AG04449 (cell line): ENCODE measurements at regions of chr14 and their contacts with region 1.

Region 1: DNA sequence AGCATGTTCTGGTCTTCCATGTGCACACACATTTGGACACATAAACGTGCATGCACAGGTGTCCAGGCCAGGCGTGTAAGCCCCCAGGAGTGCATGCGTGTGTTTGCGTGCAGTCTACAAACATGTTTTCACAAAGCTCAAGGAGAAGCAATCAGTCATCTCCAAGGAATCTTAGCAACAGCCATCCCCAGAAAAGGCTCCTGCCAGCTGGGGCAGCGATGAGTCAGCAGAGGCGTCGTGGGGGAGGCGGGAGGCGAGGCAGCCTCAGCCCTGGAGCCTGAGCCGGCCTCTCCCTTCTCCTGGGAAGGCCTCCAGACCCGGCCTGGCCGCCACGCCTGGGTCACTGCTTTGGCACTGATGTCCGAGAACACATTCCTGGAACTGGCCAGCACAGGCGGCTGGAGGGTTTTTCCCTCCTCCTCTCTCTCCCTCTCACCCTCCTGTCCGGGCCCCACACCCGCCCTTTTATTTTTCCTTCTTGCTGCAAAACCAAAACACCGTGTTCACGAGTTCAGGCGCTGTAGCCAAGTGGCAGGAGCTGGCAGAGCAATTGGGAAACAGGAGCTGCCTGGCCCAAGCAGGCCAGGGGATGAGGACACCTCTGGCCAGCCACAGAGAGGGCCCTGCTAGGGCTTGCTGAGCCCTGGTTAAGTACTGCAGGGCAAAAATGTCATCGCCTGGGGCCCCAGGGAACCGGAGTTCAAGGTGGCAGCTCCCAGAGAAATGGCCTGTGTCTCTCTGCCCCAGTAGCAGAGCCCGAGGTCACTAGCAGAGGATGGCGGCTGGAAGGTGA is 92.7 kb downstream of the LRRC74A start:
- DNase-seq: peak; percentile 92
- H3K4me3 ChIP-seq: peak overlapping the region; percentile 39
- CTCF ChIP-seq: peak; percentile 27

Region 2: DNA sequence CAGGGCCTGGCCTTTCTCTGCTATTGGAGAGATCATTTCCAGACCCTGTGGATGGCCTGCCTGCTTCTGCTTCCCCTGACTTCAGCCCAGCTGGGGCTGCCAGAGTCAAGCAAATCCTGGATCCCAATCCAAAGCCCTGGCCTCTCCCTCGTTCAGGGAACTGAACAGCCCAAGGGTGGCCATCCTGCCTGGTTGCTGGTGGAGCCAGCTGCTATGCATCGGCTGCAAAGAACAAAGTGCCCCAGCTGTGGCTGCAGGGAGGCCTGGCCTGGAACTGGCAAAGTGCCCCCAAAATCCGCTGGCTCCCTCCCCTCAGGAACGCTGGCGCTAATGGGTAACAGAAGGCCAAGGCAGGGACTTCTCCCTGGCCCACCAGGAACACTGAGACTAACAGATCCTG is 36.3 kb before region 1 on chr14:
- CTCF ChIA-PET with region 1: interaction called, 217 read pairs
- POLR2A ChIA-PET with region 1: no interaction called
- DNase-seq: no peak
- H3K4me3 ChIP-seq: no peak overlapping the region
- CTCF ChIP-seq: no peak

Region 3: DNA sequence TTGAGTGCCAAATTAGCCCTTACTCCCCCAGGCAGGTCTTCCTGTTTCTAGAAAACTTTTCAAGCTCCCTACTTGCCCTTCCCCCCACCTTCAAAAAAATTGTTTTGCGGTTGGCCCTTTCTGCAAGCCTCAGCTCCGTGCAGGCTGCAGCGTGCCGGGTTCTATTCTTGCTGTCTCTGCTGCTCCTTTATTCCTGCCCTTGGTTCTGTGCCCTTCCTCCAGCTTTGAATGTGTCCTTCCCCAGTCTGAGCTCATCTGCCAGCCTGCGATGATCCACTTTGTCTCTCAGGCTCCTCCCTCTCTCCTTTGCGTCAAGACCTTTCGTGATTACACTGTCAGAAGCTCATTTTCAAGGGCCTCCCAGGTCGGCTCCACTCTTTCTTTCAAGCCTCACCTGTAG is 11.0 kb after region 1 on chr14:
- CTCF ChIA-PET with region 1: interaction called, 31 read pairs
- POLR2A ChIA-PET with region 1: no interaction called
- DNase-seq: no peak
- H3K4me3 ChIP-seq: no peak overlapping the region
- CTCF ChIP-seq: no peak

Region 4: GRCh38 chr14:76956316-76957090 is 37.6 kb after region 1 on chr14:
- CTCF ChIA-PET with region 1: interaction called, 59 read pairs
- POLR2A ChIA-PET with region 1: interaction called, 23 read pairs
- DNase-seq: peak; percentile 41
- H3K4me3 ChIP-seq: peak overlapping the region; percentile 36
- CTCF ChIP-seq: peak; percentile 4

Region 5: GRCh38 chr14:77023001-77023996 is 104.4 kb after region 1 on chr14:
- CTCF ChIA-PET with region 1: interaction called, 110 read pairs
- POLR2A ChIA-PET with region 1: interaction called, 30 read pairs
- DNase-seq: no peak
- H3K4me3 ChIP-seq: peak overlapping the region; percentile 92
- CTCF ChIP-seq: peak; percentile 36

Region 6: DNA sequence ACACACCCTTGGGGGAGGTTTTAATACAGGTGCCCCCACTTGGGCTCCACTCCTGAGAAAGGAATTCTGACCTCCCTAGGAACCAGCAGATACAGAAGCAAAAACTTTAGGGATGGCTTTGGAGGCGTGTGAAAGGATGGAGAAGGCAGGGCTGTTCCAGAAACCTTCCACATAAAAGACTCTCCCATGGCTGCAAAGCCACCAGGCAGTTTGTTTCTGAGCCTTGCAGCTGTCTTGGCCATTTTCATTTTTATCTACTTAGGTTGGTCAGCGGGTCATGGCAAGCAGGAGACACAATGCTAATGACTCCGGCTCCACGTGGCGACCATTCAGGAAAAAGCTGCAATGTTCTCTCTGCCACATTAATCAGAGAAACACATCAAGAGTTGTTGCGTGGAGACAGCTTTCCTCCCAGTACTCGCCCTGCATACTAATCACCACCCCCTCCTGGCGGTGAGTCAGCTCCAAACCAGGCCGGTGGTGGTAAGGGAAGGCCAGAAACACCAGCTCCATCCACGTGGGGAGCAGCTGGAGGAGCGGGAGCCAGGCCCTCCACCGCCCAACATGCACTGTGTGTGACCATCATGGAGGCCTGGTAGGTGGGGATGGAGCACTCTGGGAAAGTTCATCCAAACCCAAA is 140.4 kb after region 1 on chr14:
- CTCF ChIA-PET with region 1: interaction called, 1,142 read pairs
- POLR2A ChIA-PET with region 1: interaction called, 11 read pairs
- DNase-seq: no peak
- H3K4me3 ChIP-seq: no peak overlapping the region
- CTCF ChIP-seq: peak; percentile 44